Common myeloid progenitor, CD34-positive (primary cell): ENCODE measurements at regions of chr17 and their contacts with region 1.

Region 1: DNA sequence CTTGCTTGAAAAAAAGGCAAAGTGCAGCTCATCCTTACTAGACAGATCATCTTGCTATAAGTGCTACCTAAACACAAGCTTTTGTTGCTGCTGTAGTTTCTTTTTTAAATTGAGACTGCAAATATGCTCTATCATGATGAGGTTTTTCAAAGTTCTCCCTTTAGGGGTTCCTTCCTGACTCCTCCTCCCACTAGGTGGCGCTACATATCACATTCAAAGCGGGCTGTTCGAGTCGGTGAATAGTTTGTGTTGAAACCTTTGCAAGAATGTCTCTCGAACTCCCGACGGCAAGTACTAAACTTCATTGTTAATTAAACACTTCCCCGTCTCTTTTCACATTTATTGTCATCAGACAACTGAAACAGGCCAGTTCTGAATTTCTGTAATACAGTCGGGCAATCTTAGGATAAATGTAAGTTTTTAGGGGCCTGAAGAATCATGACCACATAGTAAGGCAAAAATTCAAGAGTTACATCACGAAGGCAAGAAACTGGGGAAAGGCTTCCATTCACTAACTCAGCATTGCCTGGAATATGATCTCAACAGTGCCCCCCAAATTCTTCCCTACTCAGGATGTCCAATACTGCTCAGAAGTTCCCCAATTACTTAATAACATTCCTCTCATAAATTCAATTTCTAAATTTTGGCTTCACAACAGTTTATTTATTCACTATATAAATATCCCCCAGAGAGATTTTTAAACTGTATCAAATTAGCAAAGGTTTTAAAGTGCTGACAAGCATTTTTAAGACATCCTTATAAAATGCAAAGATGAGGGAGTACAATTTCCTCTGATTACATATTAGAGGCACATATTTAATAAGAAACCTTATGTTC is 6.7 kb downstream of the HS3ST3A1 start:
- DNase-seq: peak; percentile 85 to 94 (median 93)
- H3K4me3 ChIP-seq: no peak overlapping the region
- H3K27ac ChIP-seq: no peak overlapping the region
- H3K4me1 ChIP-seq: peaks cover 0 to 4% (median 2%) of the 10 kb centered on the region in 4 experiments
- H3K27me3 ChIP-seq: peaks cover 4 to 20% (median 17%) of the 10 kb centered on the region in 5 experiments

Region 2: DNA sequence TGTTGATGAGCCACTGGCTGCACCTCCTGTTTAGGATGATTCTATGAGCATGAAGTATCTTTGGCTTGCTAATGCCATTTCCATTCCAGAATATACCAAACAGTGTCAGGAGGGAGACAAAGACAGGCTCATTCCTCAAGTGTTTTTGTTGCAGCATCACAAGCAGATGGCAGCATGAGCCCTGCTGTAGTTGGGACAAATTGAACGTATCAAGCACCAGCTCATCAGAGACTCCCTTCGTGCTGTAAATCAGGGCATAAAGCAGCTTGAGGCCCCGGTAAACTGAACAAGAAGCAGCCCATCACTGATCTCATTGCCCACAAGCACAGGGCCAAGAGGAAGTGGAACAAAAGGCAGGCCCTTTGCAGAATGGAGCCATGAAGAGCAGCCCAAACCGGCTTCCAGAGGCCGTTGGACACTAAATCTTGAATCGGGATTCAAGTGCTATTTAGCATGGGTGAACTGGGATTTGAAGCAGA is 52.6 kb after region 1 on chr17:
- CTCF ChIA-PET with region 1: no interaction called
- POLR2A ChIA-PET with region 1: no interaction called
- DNase-seq: no peak
- H3K4me3 ChIP-seq: no peak overlapping the region
- H3K27ac ChIP-seq: no peak overlapping the region
- H3K4me1 ChIP-seq: no peaks in the 10 kb centered on the region
- H3K27me3 ChIP-seq: no peaks in the 10 kb centered on the region

Region 3: DNA sequence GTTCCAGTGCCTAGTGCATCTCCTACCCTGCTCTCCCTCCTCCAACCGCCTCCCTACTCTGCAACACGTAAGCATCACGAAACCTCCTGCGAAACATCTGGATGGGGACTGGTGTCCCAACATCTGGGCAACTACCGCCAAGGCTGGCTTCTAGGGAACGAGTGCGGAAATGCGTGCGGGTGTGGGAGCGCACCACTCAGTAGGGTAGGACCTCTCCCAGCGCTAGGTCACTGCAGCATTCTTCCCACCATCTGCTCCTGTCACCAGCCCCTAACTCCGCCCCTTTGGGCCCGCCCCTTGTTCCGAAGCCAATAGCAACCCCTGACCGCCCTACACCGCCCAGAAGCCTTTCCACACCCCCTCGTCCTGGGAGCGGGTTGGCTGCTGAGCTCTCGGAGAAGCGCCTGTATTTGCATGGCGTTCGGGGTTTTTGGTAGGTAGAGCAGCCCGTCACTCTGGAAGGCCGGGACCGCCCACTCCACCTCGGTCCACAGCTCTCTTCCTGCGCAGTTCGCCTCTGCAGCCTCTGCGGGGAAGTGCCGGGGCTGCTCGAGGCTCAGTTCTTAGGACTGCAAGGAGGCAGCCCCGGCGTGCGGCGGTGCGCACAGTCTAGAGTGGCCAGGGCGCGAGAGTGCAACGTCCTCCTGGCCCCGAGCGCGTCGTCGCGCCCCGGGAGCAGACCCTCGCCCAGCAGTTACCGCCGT is 705.7 kb after region 1 on chr17 and contains the start of gene HS3ST3B1:
- CTCF ChIA-PET with region 1: interaction called, 13 read pairs
- POLR2A ChIA-PET with region 1: no interaction called
- DNase-seq: peak; percentile 99 to 100 (median 99)
- H3K4me3 ChIP-seq: peak within 1 kb of the TSS; percentile 49 to 92 (median 78)
- H3K27ac ChIP-seq: no peak within 1 kb of the TSS
- H3K4me1 ChIP-seq: peaks cover 14 to 74% (median 70%) of the 10 kb centered on the region in 4 experiments
- H3K27me3 ChIP-seq: peaks cover 0 to 50% (median 17%) of the 10 kb centered on the region in 5 experiments

Region 4: DNA sequence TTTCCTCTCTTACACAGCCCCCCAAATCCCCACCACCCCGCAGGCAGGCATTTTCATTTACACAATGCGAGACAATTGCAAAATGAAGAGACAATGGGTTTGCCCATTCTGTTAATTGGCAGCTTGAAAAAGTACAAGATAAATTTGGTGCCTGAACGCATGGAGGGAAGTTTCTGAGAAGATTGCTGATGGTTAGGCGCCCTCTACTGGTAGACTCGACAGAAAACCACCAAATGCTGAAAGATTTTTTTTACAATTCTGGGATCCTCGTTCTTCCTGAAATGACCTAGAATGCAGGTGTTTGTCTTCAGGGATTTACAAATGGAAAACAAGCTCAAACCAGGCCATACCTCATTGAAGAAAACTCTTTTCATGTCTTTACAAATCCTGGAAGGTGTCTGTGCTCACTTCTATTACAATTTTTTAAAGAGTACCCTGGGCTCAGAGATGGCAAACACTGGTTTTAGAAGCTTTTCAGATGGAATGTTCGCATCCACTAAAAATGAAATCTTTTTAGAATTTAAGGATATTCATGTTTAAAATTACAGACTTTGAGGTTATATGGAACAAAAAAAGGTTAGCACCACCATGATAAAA is 1331.6 kb after region 1 on chr17:
- CTCF ChIA-PET with region 1: interaction called, 23 read pairs
- POLR2A ChIA-PET with region 1: no interaction called
- DNase-seq: peak; percentile 71 to 81 (median 78)
- H3K4me3 ChIP-seq: no peak overlapping the region
- H3K27ac ChIP-seq: no peak overlapping the region
- H3K4me1 ChIP-seq: no peaks in the 10 kb centered on the region
- H3K27me3 ChIP-seq: peaks cover 0 to 1% (median 0%) of the 10 kb centered on the region in 5 experiments